PC-3 (cell line): ENCODE measurements at regions of chr7 and their contacts with region 1.

Region 1: DNA sequence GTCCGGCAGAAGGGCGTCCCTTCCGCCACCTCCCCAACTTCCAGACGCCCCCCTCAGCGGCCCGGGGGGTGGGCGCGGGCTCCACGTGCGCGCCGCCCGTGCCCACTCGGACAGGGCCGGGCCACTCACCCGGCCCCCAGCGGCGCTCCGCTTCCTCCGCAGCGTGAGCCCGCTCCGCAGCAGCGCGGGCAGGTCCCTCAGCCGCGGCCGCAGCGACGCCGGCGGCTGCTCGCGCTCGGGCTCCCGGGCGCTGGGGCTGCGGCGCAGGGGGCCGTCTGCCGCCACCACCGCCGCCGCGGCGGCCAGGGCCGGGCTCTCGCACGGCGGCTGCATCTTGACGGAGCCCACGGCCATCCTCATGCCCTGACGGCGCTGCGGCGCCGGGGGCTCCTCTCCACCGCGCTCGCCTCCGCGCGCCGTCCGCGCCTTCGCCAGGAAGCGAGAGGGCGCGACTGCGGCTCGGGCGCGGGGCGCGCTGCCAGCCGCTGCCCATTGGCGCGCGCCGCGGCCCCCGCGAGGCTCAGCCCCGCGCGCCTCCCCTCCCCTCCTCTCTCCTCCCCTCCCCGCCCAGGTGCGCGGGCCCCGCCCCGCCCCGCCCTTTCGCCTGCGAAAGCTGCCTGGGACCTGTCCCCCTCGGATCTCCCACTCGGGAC is at the start of gene RAPGEF5:
- DNase-seq: peak; percentile 67
- ATAC-seq: peak; percentile 53
- H3K4me3 ChIP-seq: peak within 1 kb of the TSS; percentile 74
- H3K27ac ChIP-seq: peak within 1 kb of the TSS; percentile 31
- H3K4me1 ChIP-seq: peaks cover 34% of the 10 kb centered on the region
- H3K27me3 ChIP-seq: no peaks in the 10 kb centered on the region
- CTCF ChIP-seq: no peak
- total RNA-seq, gene RAPGEF5: 5.6 and 10.8 TPM in 2 replicates

Region 2: DNA sequence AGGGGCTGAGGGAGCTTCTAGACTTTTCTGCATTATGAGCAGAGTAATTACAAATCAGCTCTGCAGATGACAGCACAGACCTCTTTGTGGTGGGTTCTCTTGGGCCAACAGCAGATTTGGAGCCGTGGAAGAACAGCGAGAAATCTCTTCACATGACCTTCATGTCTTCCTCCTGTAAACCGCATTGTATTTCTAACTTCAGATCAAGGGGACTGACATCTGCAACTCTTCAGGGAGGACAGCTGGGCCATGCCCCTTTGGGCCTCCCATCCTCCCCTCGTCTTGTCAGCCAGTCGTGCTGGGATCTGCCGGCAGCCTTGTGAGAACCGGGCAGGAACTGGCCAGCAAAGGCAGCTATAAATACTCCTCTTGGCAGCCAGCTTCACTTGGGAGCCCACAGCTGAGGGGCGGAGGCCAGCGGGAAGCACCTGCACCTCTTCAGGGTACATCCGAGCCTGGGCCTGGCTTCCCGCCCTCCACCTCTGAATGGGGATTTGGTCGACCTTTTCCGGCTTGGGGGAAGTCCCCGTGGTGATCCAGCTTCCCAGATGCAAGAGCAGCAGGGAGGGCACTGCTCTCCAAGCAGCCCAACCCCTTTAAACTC is 88.4 kb after region 1 on chr7:
- CTCF ChIA-PET with region 1: interaction called, 3 read pairs
- POLR2A ChIA-PET with region 1: no interaction called
- intact Hi-C with region 1: loop called (anchors 2 kb)
- DNase-seq: no peak
- ATAC-seq: no peak
- H3K4me3 ChIP-seq: no peak overlapping the region
- H3K27ac ChIP-seq: peak overlapping the region; percentile 91
- H3K4me1 ChIP-seq: peaks cover 40% of the 10 kb centered on the region
- H3K27me3 ChIP-seq: no peaks in the 10 kb centered on the region
- CTCF ChIP-seq: no peak